Activated CD4-positive, alpha-beta T cell treated with anti-CD3 and anti-CD28 coated beads for 36 hours (primary cell): ENCODE measurements at regions of chr10 and their contacts with region 1.

Region 1: GRCh38 chr10:17643755-17644484 is at the start of gene STAM:
- DNase-seq: peak; percentile 96
- ATAC-seq: peak; percentile 80
- H3K4me3 Mint-ChIP-seq: peak within 1 kb of the TSS; percentile 92
- H3K27ac Mint-ChIP-seq: peak within 1 kb of the TSS; percentile 99
- H3K4me1 Mint-ChIP-seq: peaks cover 49% of the 10 kb centered on the region
- H3K27me3 Mint-ChIP-seq: no peaks in the 10 kb centered on the region
- total RNA-seq, gene STAM: 17.9 to 23.8 TPM

Region 2: GRCh38 chr10:16436758-16437539 is 1207.0 kb before region 1 on chr10 and contains the start of gene PTER:
- CTCF ChIA-PET with region 1: no interaction called
- POLR2A ChIA-PET with region 1: no interaction called
- intact Hi-C with region 1: loop called in 1 of 2 experiments (anchors 10 kb)
- DNase-seq: peak; percentile 99
- ATAC-seq: peak; percentile 99
- H3K4me3 Mint-ChIP-seq: peak within 1 kb of the TSS; percentile 89
- H3K27ac Mint-ChIP-seq: peak within 1 kb of the TSS; percentile 92
- H3K4me1 Mint-ChIP-seq: peaks cover 39% of the 10 kb centered on the region
- H3K27me3 Mint-ChIP-seq: no peaks in the 10 kb centered on the region
- total RNA-seq, gene PTER: 33.1 to 34.5 TPM

Region 3: GRCh38 chr10:17029581-17030271 is 614.2 kb before region 1 on chr10:
- CTCF ChIA-PET with region 1: no interaction called
- POLR2A ChIA-PET with region 1: interaction called, 3 read pairs
- intact Hi-C with region 1: loop called (anchors 5 to 10 kb)
- DNase-seq: peak; percentile 93
- ATAC-seq: peak; percentile 27
- H3K4me3 Mint-ChIP-seq: peak overlapping the region; percentile 61
- H3K27ac Mint-ChIP-seq: peak overlapping the region; percentile 90
- H3K4me1 Mint-ChIP-seq: peaks cover 76% of the 10 kb centered on the region
- H3K27me3 Mint-ChIP-seq: no peaks in the 10 kb centered on the region

Region 4: DNA sequence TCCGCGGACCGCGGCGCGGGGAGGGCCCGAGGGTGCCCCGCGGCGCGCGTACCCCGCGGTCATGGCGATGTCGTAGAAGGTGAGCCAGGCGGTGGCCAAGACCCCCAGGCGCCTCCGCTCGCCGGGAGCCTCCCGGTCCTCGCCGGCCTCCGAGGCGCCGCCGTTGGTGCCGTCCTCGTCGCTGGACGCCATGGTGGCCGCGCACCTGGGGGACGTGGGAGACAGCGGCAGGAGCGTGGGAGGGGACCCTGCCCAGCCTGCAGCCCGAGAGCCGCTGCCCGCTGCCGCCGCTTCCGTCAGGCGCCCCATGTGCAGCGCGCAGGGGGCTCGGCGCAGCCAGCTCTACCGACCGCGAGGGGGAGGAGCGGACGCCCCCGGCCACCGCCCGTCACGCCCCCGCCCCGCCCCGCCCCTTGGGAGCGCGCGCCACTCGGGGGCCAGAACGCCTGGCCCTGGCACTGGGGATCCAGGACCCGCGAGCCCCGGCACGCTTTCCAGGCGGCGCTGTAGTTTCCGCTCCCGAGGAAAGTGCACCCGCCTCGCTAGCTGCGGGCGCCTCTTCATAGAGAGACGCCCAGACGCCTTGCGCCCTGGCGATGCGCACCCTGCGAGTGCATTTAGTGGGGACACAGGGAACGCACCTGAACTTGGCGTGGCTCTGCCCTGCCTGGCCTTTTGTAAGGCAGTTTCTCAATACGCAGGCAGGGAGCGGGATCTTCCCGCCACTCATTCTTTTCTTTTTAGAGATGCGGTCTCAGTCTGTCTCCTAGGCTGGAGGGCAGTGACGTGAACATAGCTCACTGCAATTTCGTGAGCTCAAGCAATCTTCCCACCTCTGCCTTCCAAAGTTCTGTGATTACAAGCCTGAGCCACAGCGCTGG is 26.6 kb before region 1 on chr10 and contains the start of gene HACD1:
- CTCF ChIA-PET with region 1: interaction called, 4 read pairs
- POLR2A ChIA-PET with region 1: interaction called, 10 read pairs
- intact Hi-C with region 1: loop called (anchors 1 kb)
- DNase-seq: peak; percentile 74
- ATAC-seq: peak; percentile 75
- H3K4me3 Mint-ChIP-seq: peak within 1 kb of the TSS; percentile 78
- H3K27ac Mint-ChIP-seq: peak within 1 kb of the TSS; percentile 55
- H3K4me1 Mint-ChIP-seq: peaks cover 5% of the 10 kb centered on the region
- H3K27me3 Mint-ChIP-seq: peaks cover 13% of the 10 kb centered on the region
- total RNA-seq, gene HACD1: 1.7 to 2.2 TPM

Region 5: GRCh38 chr10:17685233-17685840 is 41.4 kb after region 1 on chr10:
- CTCF ChIA-PET with region 1: interaction called, 3 read pairs
- POLR2A ChIA-PET with region 1: interaction called, 3 read pairs
- intact Hi-C with region 1: loop called (anchors 2 kb)
- DNase-seq: peak; percentile 63
- ATAC-seq: peak; percentile 77
- H3K4me3 Mint-ChIP-seq: no peak overlapping the region
- H3K27ac Mint-ChIP-seq: peak overlapping the region; percentile 10
- H3K4me1 Mint-ChIP-seq: peaks cover 35% of the 10 kb centered on the region
- H3K27me3 Mint-ChIP-seq: no peaks in the 10 kb centered on the region

Region 6: DNA sequence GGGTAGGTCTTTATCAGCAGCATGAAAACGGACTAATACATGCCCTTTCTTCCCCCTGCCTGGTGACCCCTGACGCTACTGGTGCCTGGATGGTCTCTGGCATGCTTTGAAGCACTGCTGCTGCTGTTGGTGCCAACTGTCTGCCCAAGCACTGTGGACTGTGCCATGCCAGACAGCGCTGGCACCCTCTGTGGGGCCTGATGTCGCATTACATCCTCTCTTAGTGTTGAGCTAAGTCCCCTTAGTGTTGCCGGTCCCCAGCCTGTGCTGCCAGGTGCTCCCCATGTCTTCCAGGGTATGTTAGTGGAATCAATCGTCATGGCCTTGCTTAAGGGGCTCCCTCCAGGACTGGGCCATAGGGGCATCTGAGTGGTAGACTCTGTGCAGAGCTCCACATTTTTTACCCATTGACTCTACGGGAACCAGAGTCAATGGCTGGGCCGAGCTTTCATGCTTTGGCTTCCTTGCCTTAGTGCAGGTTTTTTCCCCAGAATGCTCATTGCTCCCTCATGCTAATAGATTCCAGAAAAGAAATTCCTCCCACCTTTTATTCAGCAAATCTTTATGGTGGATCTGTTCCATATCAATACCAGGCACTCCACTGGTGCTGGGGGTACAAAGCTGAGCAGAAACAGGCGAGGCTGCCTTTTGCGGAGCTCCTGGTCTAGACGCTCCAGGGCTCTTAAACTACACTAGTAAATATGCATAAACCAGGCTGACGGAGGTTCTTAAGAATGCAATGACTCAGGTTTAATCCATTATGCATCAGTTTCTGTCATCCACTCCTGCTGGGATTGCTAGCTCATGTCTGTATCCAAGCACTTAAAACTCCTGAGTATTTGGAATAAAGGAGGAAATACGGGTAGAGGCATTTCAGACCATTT is 143.4 kb after region 1 on chr10:
- CTCF ChIA-PET with region 1: no interaction called
- POLR2A ChIA-PET with region 1: no interaction called
- intact Hi-C with region 1: no loop called
- DNase-seq: no peak
- ATAC-seq: no peak
- H3K4me3 Mint-ChIP-seq: no peak overlapping the region
- H3K27ac Mint-ChIP-seq: no peak overlapping the region
- H3K4me1 Mint-ChIP-seq: no peaks in the 10 kb centered on the region
- H3K27me3 Mint-ChIP-seq: no peaks in the 10 kb centered on the region